Psoas muscle (tissue), 8 donors: ENCODE measurements at regions of chr6 and their contacts with region 1.

Region 1: GRCh38 chr6:137094411-137095008 is 49.7 kb upstream of the IL20RA start:
- DNase-seq: peak; percentile 39 to 70
- ATAC-seq: peak in 3 of 4 donors; percentile 59 to 85 (median 75)
- H3K4me3 ChIP-seq: no peak overlapping the region
- H3K27ac ChIP-seq: no peak overlapping the region
- H3K4me1 ChIP-seq: no peaks in the 10 kb centered on the region
- H3K27me3 ChIP-seq: no peaks in the 10 kb centered on the region
- CTCF ChIP-seq: peak; percentile 74

Region 2: GRCh38 chr6:137112067-137112355 is 17.5 kb after region 1 on chr6:
- intact Hi-C with region 1: no loop called
- DNase-seq: no peak
- ATAC-seq: no peak
- H3K4me3 ChIP-seq: no peak overlapping the region
- H3K27ac ChIP-seq: no peak overlapping the region
- H3K4me1 ChIP-seq: no peaks in the 10 kb centered on the region
- H3K27me3 ChIP-seq: peaks cover 0 to 3% (median 0%) of the 10 kb centered on the region in 3 donors
- CTCF ChIP-seq: no peak

Region 3: DNA sequence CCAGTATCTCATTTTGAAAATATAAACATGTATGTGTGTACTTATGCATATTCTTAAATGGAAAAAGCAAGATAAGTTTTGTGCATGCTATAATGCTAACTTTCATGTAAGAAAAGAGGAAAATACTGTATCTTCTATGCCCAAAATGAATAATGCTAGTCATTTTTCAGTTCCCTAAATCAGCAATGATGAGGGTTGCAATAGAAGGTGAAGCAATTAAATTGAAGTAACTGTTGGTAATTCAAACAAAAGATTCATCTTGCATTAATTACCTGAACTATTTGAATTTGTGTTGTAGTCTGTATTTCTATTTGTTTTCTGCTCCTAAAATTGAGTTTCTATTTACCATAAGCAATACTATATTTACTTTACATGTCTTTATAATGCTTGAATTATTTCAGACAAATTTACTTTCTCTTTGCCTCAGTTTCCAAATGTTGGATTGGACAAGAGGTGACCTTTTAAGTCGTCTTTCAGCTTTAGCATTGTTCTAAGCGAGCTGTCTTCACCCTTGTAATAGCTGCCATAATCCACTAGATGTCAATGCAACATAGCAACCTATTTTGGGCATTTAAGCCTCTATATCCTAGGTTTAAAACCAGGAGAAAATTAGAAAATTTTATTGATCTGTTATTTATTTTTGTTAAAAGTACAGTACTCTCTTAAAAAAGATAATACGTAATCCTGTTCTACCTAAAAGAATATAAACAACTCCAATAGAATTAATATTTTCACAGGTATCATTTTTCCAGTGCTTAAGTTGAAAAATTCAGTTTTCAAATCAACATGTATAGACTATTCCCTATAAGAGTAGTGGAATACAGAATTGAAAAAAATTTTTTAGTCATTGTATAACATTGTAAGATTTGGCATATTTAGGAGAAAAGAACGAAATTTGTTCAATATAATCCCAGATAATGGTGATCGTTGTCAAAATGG is 177.0 kb after region 1 on chr6:
- intact Hi-C with region 1: loop called in 1 of 2 experiments (anchors 1 kb)
- DNase-seq: no peak
- ATAC-seq: peak in 3 of 4 donors; percentile 70 to 84 (median 76)
- H3K4me3 ChIP-seq: no peak overlapping the region
- H3K27ac ChIP-seq: no peak overlapping the region
- H3K4me1 ChIP-seq: no peaks in the 10 kb centered on the region
- H3K27me3 ChIP-seq: no peaks in the 10 kb centered on the region
- CTCF ChIP-seq: peak; percentile 93

Region 4: DNA sequence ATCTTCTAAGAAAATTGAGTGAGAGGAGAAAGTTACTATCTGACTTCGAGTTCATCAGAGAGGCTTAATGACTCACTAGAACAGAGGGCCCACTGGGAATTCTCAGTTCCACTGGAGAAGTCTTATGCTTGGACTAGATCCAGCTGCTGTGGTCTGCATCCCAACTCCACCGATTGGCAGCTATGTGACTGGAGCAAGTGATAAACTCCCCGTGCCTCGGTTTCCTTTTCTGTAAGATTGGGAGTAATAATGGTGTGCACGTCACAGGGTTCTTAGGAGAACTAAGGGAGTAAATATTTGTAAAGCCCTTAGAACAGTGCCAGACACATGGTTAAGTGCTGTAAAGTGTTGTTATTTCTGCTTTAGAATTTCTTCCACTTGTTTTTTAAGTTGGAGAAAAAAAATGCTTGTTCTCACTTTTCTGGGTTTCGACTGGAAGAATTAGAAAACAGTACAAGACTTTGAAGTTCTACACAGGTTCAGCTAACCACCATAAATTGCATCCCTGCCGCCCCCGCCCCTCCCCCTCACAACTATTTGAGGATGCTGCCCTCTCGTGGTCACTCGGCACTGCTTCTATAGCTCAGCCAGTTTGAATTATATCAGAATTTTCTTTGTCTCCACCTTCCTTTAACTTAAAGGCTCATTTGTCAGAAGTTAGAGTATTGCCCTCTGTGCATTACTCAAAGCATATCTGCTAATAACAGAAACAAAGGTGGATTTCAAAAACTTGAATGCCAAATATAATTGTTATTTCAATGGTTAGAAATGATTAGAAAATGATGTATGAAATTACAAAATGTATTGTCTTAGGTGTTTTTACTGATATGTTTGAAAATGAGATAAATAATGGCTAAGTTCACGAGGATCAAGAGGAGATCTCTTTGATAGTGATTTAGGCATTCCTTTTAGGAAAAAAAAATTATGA is 219.7 kb after region 1 on chr6:
- intact Hi-C with region 1: loop called (anchors 5 kb)
- DNase-seq: peak; percentile 68 to 79
- ATAC-seq: peak; percentile 70 to 95 (median 79)
- H3K4me3 ChIP-seq: peak overlapping the region; percentile 34
- H3K27ac ChIP-seq: no peak overlapping the region
- H3K4me1 ChIP-seq: no peaks in the 10 kb centered on the region
- H3K27me3 ChIP-seq: no peaks in the 10 kb centered on the region
- CTCF ChIP-seq: peak; percentile 78

Region 5: DNA sequence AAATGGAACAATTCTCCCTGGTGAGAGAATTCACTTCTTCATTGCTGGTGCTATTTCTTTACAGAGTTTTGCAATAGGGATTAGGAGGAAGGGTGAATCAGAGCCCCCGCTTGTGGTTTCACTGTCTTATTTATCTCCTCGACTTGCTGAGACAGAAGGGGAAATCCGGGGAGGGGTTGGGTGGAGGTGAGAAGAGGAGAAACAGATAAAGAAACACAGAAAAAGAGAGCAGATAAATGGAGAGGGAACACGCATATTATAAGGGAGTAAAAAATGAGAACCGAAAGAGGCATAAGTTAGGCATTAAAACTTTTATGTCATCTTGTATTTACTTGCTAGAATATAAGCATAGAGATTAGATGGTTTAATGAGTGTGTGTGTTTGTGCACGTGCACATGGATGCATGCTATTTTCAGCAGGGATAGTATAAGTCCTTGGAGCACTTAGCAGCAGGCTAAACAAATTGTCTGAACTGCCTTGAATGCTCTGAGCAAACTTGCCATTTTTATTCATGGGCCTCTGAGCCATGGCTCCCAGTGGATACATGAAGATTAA is 294.7 kb after region 1 on chr6:
- intact Hi-C with region 1: no loop called
- DNase-seq: no peak
- ATAC-seq: no peak
- H3K4me3 ChIP-seq: no peak overlapping the region
- H3K27ac ChIP-seq: no peak overlapping the region
- H3K4me1 ChIP-seq: no peaks in the 10 kb centered on the region
- H3K27me3 ChIP-seq: no peaks in the 10 kb centered on the region
- CTCF ChIP-seq: no peak

Region 6: DNA sequence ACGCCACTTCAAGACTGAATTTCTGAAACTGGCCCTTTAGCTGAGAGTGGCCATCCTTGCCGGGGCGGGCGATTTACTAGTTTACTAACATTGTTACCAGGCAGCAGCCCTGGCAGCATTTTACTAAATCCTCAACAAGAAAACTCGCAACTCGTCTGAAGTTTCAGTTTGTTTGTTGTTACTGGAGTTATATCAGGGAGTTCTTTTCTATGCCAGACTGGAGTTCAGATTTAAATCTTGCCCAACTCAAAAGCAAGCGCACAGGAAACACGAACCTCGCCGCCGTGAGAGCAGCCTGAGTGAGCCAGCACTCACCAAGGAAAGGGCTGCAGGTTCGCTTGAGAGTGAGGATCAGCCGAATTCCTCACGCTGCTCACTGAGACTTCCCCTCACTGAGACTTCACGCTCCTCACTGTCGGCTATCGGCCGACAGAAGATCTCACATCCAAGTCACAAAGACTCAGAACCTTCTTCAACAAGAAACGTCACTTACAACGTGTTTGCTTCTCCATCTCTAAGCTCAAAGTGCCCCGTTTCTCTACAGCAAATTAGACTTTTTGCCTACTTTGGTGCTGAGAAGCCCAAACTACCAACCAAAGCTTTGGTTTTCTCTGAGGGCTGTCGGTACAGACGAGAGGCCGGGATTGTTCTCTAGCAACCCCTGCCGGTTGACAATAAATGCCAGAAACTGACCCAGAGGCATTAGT is 320.8 kb after region 1 on chr6:
- intact Hi-C with region 1: loop called in 1 of 2 experiments (anchors 10 kb)
- DNase-seq: peak in 1 of 2 donors; percentile 27
- ATAC-seq: peak; percentile 74 to 96 (median 84)
- H3K4me3 ChIP-seq: peak overlapping the region; percentile 70
- H3K27ac ChIP-seq: no peak overlapping the region
- H3K4me1 ChIP-seq: peaks cover 7% of the 10 kb centered on the region
- H3K27me3 ChIP-seq: no peaks in the 10 kb centered on the region
- CTCF ChIP-seq: peak; percentile 58